Caco-2 (cell line): ENCODE measurements at regions of chr13 and their contacts with region 1.

Region 1: GRCh38 chr13:57624565-57625435 is 6.7 kb upstream of the PCDH17 start:
- DNase-seq: peak; percentile 47 to 73
- H3K4me3 ChIP-seq: no peak overlapping the region
- H3K4me3 Mint-ChIP-seq: no peak overlapping the region
- H3K27ac Mint-ChIP-seq: no peak overlapping the region
- H3K4me1 ChIP-seq: no peaks in the 10 kb centered on the region
- H3K4me1 Mint-ChIP-seq: no peaks in the 10 kb centered on the region
- H3K27me3 ChIP-seq: no peaks in the 10 kb centered on the region
- H3K27me3 Mint-ChIP-seq: peaks cover 10% of the 10 kb centered on the region
- CTCF ChIP-seq: peak; percentile 70 to 87

Region 2: DNA sequence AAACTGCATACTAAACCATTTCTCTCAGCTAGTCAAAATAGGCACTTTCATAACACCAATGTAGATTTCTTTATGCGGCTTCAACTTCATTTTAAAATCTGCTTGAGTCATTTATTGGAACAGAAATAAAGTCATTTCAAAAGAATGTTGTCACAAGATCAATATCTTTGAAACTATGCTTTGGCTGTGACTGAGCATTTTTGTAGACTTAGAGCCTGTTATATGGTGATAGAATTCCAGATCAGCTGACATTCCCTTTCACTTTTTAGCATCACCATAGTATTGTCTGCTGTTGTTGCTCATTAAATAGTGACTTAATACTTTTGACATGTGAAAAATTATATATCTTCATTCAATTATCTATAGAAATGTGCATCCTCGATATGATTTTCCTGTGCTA is 763.3 kb before region 1 on chr13:
- CTCF ChIA-PET with region 1: no interaction called
- POLR2A ChIA-PET with region 1: no interaction called
- intact Hi-C with region 1: no loop called
- DNase-seq: no peak
- H3K4me3 ChIP-seq: no peak overlapping the region
- H3K4me3 Mint-ChIP-seq: no peak overlapping the region
- H3K27ac Mint-ChIP-seq: no peak overlapping the region
- H3K4me1 ChIP-seq: no peaks in the 10 kb centered on the region
- H3K4me1 Mint-ChIP-seq: no peaks in the 10 kb centered on the region
- H3K27me3 ChIP-seq: no peaks in the 10 kb centered on the region
- H3K27me3 Mint-ChIP-seq: no peaks in the 10 kb centered on the region
- CTCF ChIP-seq: no peak

Region 3: GRCh38 chr13:57123681-57124080 is 501.1 kb before region 1 on chr13:
- CTCF ChIA-PET with region 1: no interaction called
- POLR2A ChIA-PET with region 1: no interaction called
- intact Hi-C with region 1: no loop called
- DNase-seq: no peak
- H3K4me3 ChIP-seq: no peak overlapping the region
- H3K4me3 Mint-ChIP-seq: no peak overlapping the region
- H3K27ac Mint-ChIP-seq: no peak overlapping the region
- H3K4me1 ChIP-seq: no peaks in the 10 kb centered on the region
- H3K4me1 Mint-ChIP-seq: no peaks in the 10 kb centered on the region
- H3K27me3 ChIP-seq: no peaks in the 10 kb centered on the region
- H3K27me3 Mint-ChIP-seq: peaks cover 2% of the 10 kb centered on the region
- CTCF ChIP-seq: no peak

Region 4: GRCh38 chr13:57582032-57582431 is 42.8 kb before region 1 on chr13:
- CTCF ChIA-PET with region 1: interaction called, 30 read pairs
- POLR2A ChIA-PET with region 1: no interaction called
- intact Hi-C with region 1: loop called (anchors 1 kb)
- DNase-seq: peak; percentile 45 to 46
- H3K4me3 ChIP-seq: no peak overlapping the region
- H3K4me3 Mint-ChIP-seq: no peak overlapping the region
- H3K27ac Mint-ChIP-seq: no peak overlapping the region
- H3K4me1 ChIP-seq: no peaks in the 10 kb centered on the region
- H3K4me1 Mint-ChIP-seq: no peaks in the 10 kb centered on the region
- H3K27me3 ChIP-seq: no peaks in the 10 kb centered on the region; the same call in 1 of the 2 replicates
- H3K27me3 Mint-ChIP-seq: peaks cover 27% of the 10 kb centered on the region
- CTCF ChIP-seq: peak in 1 of 2 experiments; percentile 22

Region 5: GRCh38 chr13:57716295-57716694 is 91.5 kb after region 1 on chr13:
- CTCF ChIA-PET with region 1: interaction called, 26 read pairs
- POLR2A ChIA-PET with region 1: no interaction called
- intact Hi-C with region 1: loop called (anchors 1 kb)
- DNase-seq: peak; percentile 43 to 55
- H3K4me3 ChIP-seq: no peak overlapping the region
- H3K4me3 Mint-ChIP-seq: no peak overlapping the region
- H3K27ac Mint-ChIP-seq: no peak overlapping the region
- H3K4me1 ChIP-seq: no peaks in the 10 kb centered on the region
- H3K4me1 Mint-ChIP-seq: no peaks in the 10 kb centered on the region
- H3K27me3 ChIP-seq: no peaks in the 10 kb centered on the region
- H3K27me3 Mint-ChIP-seq: peaks cover 3% of the 10 kb centered on the region
- CTCF ChIP-seq: peak in 1 of 2 experiments; percentile 74

Region 6: DNA sequence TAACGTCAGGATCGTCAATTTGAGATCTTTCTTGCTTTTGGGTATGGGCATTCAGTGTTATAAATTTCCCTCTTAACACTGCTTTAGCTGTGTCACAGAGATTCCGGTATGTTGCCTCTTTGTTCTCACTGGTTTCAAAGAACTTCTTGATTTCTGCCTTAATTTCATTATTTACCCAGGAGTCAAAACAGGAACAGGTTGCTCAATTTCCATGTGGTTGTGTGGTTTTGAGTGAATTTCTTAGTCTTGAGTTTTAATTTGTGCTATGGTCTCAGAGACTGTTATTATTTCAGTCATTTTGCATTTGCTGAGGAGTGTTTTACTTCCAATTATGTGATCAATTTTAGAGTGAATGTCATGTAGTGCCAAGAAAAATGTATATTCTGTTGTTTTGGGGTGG is 159.8 kb after region 1 on chr13:
- CTCF ChIA-PET with region 1: no interaction called
- POLR2A ChIA-PET with region 1: no interaction called
- intact Hi-C with region 1: loop called (anchors 5 kb)
- DNase-seq: no peak
- H3K4me3 ChIP-seq: no peak overlapping the region
- H3K4me3 Mint-ChIP-seq: no peak overlapping the region
- H3K27ac Mint-ChIP-seq: no peak overlapping the region
- H3K4me1 ChIP-seq: no peaks in the 10 kb centered on the region
- H3K4me1 Mint-ChIP-seq: no peaks in the 10 kb centered on the region
- H3K27me3 ChIP-seq: no peaks in the 10 kb centered on the region
- H3K27me3 Mint-ChIP-seq: peaks cover 3% of the 10 kb centered on the region
- CTCF ChIP-seq: no peak

Region 7: DNA sequence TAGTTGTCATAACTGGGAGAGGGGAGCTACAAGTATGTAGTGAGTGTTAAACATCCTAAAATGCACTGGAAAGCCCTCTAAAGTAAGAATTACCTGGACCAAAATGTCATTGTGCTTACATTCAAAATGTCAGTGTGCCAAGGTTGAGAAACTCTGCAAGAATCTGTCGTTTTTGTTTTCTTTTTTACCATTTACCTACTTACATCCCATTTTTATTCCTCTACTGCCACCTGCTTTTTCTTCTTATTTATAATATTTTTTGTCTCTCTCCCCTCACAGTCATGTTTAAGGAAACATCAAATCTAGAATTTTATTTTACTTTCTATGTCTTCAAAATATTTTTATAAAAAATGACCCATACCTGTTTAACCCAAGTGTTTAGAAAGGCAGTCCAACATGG is 233.1 kb after region 1 on chr13:
- CTCF ChIA-PET with region 1: no interaction called
- POLR2A ChIA-PET with region 1: no interaction called
- intact Hi-C with region 1: loop called (anchors 5 kb)
- DNase-seq: no peak
- H3K4me3 ChIP-seq: no peak overlapping the region
- H3K4me3 Mint-ChIP-seq: no peak overlapping the region
- H3K27ac Mint-ChIP-seq: no peak overlapping the region
- H3K4me1 ChIP-seq: no peaks in the 10 kb centered on the region
- H3K4me1 Mint-ChIP-seq: no peaks in the 10 kb centered on the region
- H3K27me3 ChIP-seq: no peaks in the 10 kb centered on the region
- H3K27me3 Mint-ChIP-seq: no peaks in the 10 kb centered on the region
- CTCF ChIP-seq: no peak

Region 8: DNA sequence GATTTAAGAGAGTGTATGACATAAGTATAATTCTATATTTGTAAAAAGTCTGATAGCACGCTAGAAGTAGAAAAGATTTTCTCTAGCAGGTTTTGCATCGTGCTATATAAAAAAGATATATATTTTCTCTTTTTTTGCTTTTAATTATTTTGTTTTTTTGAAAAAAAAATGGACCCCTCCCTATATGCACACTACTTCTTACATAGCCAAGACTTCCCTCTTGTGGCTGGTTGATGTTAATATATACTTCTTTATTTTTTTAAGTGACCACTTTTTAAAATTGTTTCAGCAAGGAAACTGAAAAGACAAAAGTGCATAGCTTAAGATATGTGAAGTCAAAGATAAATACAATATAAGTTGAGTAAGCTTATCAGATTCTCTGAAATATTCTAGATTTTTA is 1336.1 kb after region 1 on chr13:
- CTCF ChIA-PET with region 1: no interaction called
- POLR2A ChIA-PET with region 1: no interaction called
- intact Hi-C with region 1: loop called (anchors 2 kb)
- DNase-seq: no peak
- H3K4me3 ChIP-seq: no peak overlapping the region
- H3K4me3 Mint-ChIP-seq: no peak overlapping the region
- H3K27ac Mint-ChIP-seq: no peak overlapping the region
- H3K4me1 ChIP-seq: no peaks in the 10 kb centered on the region
- H3K4me1 Mint-ChIP-seq: no peaks in the 10 kb centered on the region
- H3K27me3 ChIP-seq: no peaks in the 10 kb centered on the region
- H3K27me3 Mint-ChIP-seq: no peaks in the 10 kb centered on the region
- CTCF ChIP-seq: peak in 1 of 2 experiments; percentile 33